IMR-90 (cell line): ENCODE measurements at regions of chr21 and their contacts with region 1.

Region 1: DNA sequence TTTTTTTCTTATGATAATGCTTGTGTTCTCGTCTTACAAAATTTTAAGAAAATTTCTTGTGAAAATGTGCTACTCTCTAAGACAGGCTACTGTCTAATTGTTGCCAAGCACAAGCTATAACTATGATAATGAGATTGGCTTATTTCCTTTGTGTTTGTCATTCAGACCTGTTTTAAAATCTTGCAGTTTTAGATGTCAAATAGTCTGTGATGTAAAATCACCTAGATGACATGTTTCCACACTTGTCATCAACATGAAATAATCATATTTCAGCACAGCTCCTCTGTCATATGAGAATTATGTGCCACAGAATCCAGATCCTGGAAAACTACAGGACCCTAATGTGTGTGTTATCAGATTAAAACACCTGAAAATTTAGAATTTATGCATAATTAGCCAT is 539.7 kb downstream of the USP25 start:
- DNase-seq: no peak
- ATAC-seq: no peak
- H3K4me3 ChIP-seq: no peak overlapping the region
- H3K27ac ChIP-seq: no peak overlapping the region
- H3K4me1 ChIP-seq: no peaks in the 10 kb centered on the region
- H3K27me3 ChIP-seq: no peaks in the 10 kb centered on the region
- CTCF ChIP-seq: no peak
- POLR2A ChIP-seq: no peak
- RAD21 ChIP-seq: no peak

Region 2: GRCh38 chr21:16102113-16102512 is 167.4 kb before region 1 on chr21:
- CTCF ChIA-PET with region 1: no interaction called
- POLR2A ChIA-PET with region 1: no interaction called
- dilution Hi-C with region 1: no loop called
- in situ Hi-C with region 1: no loop called
- intact Hi-C with region 1: no loop called
- DNase-seq: no peak
- ATAC-seq: no peak
- H3K4me3 ChIP-seq: no peak overlapping the region
- H3K27ac ChIP-seq: no peak overlapping the region
- H3K4me1 ChIP-seq: no peaks in the 10 kb centered on the region
- H3K27me3 ChIP-seq: no peaks in the 10 kb centered on the region
- CTCF ChIP-seq: no peak
- POLR2A ChIP-seq: no peak
- RAD21 ChIP-seq: no peak

Region 3: DNA sequence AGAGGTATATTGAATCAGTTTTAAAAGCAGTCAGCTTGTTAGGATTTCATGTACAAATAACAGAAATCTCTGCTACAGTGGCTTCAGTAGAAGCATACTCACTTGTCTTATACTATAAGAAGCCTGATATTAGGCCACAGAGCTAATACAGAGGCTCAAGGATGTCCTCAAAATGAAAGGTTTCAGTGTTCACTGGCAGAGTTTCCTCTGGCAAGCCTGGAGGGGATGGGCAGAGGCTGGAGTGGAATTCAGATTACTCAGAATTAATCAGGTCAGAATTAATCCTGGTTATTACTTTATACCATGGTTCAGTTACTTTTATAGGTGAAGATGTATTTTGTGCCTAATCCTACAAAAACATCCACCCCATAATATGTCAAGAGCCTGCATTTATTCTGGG is 19.2 kb before region 1 on chr21:
- CTCF ChIA-PET with region 1: no interaction called
- POLR2A ChIA-PET with region 1: no interaction called
- dilution Hi-C with region 1: no loop called
- in situ Hi-C with region 1: no loop called
- intact Hi-C with region 1: loop called (anchors 2 kb)
- DNase-seq: no peak
- ATAC-seq: no peak
- H3K4me3 ChIP-seq: no peak overlapping the region
- H3K27ac ChIP-seq: no peak overlapping the region
- H3K4me1 ChIP-seq: no peaks in the 10 kb centered on the region
- H3K27me3 ChIP-seq: no peaks in the 10 kb centered on the region
- CTCF ChIP-seq: no peak
- POLR2A ChIP-seq: no peak
- RAD21 ChIP-seq: no peak

Region 4: DNA sequence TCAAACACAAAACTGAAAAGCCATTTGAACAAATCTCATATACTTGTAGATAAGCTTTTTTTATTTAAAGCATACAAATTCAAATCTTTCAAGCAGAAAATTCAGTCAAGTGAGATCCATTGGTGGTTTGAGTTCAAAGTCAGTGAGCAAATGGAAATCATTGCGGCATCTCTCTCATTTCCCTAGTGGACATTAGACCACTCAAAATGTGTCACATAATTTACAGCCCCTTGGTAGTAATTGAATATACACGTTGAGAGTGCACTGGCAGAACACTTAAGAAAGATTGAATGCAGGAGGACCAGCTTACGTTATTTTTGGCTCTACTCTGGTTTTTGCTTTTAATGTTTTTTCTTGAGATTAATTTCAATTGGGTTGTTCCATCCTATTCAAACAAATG is 94.0 kb after region 1 on chr21:
- CTCF ChIA-PET with region 1: no interaction called
- POLR2A ChIA-PET with region 1: no interaction called
- dilution Hi-C with region 1: no loop called
- in situ Hi-C with region 1: no loop called
- intact Hi-C with region 1: no loop called
- DNase-seq: no peak
- ATAC-seq: no peak
- H3K4me3 ChIP-seq: no peak overlapping the region
- H3K27ac ChIP-seq: no peak overlapping the region
- H3K4me1 ChIP-seq: no peaks in the 10 kb centered on the region
- H3K27me3 ChIP-seq: no peaks in the 10 kb centered on the region
- CTCF ChIP-seq: no peak
- POLR2A ChIP-seq: no peak
- RAD21 ChIP-seq: no peak

Region 5: DNA sequence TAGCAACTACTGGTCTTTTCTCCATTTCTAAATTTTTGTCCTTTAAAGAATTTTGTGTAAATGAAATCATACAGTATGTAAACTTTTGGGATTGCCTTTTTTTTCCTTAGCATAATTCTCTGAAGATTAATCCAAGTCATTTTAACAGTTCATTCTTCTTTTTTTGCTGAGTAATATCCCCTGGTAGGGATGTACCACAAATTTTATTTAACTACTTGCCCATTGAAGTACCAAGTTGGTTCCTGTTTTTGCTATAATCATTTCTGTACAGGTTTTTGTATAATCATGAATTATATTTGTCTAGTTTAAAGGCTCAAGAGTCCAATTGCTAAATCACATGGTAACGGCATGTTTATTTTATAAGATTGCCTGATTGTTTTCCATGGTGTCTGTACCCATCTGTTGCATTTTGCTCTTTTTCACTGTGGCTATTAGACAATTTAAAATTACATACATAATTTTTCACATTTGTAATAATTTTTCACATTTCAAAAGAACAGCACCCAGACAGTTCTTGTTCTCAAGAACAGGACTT is 351.4 kb after region 1 on chr21:
- CTCF ChIA-PET with region 1: no interaction called
- POLR2A ChIA-PET with region 1: no interaction called
- dilution Hi-C with region 1: no loop called
- in situ Hi-C with region 1: no loop called
- intact Hi-C with region 1: no loop called
- DNase-seq: no peak
- ATAC-seq: no peak
- H3K4me3 ChIP-seq: no peak overlapping the region
- H3K27ac ChIP-seq: no peak overlapping the region
- H3K4me1 ChIP-seq: no peaks in the 10 kb centered on the region
- H3K27me3 ChIP-seq: no peaks in the 10 kb centered on the region
- CTCF ChIP-seq: no peak
- POLR2A ChIP-seq: no peak
- RAD21 ChIP-seq: no peak

Region 6: DNA sequence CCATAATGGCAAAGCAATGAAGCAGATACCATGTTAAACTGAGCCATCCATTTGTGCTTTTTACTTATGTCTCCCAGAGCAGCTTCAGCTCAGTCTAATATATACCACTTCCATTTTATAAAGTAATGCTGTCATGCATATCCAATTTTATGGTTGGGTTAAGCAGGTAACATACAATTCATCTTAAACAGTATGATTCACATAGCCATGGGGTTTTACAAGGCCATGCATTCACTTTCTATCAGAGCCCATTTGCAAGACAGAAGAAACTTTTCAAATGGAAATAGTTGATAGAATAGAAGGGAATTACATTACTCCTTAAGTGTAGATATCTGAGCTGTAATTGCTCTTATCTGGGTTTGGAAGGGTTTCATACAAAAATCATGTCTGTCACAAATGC is 662.8 kb after region 1 on chr21:
- CTCF ChIA-PET with region 1: no interaction called
- POLR2A ChIA-PET with region 1: no interaction called
- dilution Hi-C with region 1: no loop called
- in situ Hi-C with region 1: no loop called
- intact Hi-C with region 1: no loop called
- DNase-seq: no peak
- ATAC-seq: no peak
- H3K4me3 ChIP-seq: no peak overlapping the region
- H3K27ac ChIP-seq: no peak overlapping the region
- H3K4me1 ChIP-seq: no peaks in the 10 kb centered on the region
- H3K27me3 ChIP-seq: no peaks in the 10 kb centered on the region
- CTCF ChIP-seq: no peak
- POLR2A ChIP-seq: no peak
- RAD21 ChIP-seq: no peak